Tibial artery (tissue), 4 donors: ENCODE measurements at regions of chr16 and their contacts with region 1.

Region 1: GRCh38 chr16:67528222-67528869 is at the start of gene RIPOR1:
- DNase-seq: peak in 1 of 2 donors; percentile 86
- H3K4me3 ChIP-seq: peak within 1 kb of the TSS; percentile 76 to 85
- H3K27ac ChIP-seq: peak within 1 kb of the TSS; percentile 93 to 94
- H3K4me1 ChIP-seq: peaks cover 0 to 44% (median 24%) of the 10 kb centered on the region in 4 donors
- H3K27me3 ChIP-seq: no peaks in the 10 kb centered on the region
- CTCF ChIP-seq: no peak

Region 2: GRCh38 chr16:67561824-67562525 is 33.6 kb after region 1 on chr16:
- intact Hi-C with region 1: loop called (anchors 5 kb)
- DNase-seq: peak; percentile 97 to 98
- H3K4me3 ChIP-seq: peak overlapping the region; percentile 91 to 95
- H3K27ac ChIP-seq: peak overlapping the region; percentile 98 to 99
- H3K4me1 ChIP-seq: peaks cover 0 to 30% (median 20%) of the 10 kb centered on the region in 4 donors
- H3K27me3 ChIP-seq: no peaks in the 10 kb centered on the region
- CTCF ChIP-seq: no peak

Region 3: GRCh38 chr16:67579686-67580085 is 51.3 kb after region 1 on chr16:
- intact Hi-C with region 1: no loop called
- DNase-seq: no peak
- H3K4me3 ChIP-seq: no peak overlapping the region
- H3K27ac ChIP-seq: no peak overlapping the region
- H3K4me1 ChIP-seq: no peaks in the 10 kb centered on the region
- H3K27me3 ChIP-seq: no peaks in the 10 kb centered on the region
- CTCF ChIP-seq: no peak

Region 4: GRCh38 chr16:67719048-67719777 is 190.9 kb after region 1 on chr16 and contains the start of gene GFOD2:
- intact Hi-C with region 1: no loop called
- DNase-seq: peak; percentile 95 to 98
- H3K4me3 ChIP-seq: peak within 1 kb of the TSS; percentile 79 to 89
- H3K27ac ChIP-seq: peak within 1 kb of the TSS; percentile 87 to 90
- H3K4me1 ChIP-seq: peaks cover 0 to 22% (median 17%) of the 10 kb centered on the region in 4 donors
- H3K27me3 ChIP-seq: no peaks in the 10 kb centered on the region
- CTCF ChIP-seq: peak in 1 of 2 experiments; percentile 8